CD4-positive, alpha-beta memory T cell (primary cell): ENCODE measurements at regions of chr6 and their contacts with region 1.

Region 1: GRCh38 chr6:30453508-30454116 is 35.7 kb upstream of the HLA-E start:
- DNase-seq: peak; percentile 77 to 84 (median 81)
- H3K4me3 ChIP-seq: peak overlapping the region in 1 of 2 donors; percentile 28
- H3K4me3 Mint-ChIP-seq: peak overlapping the region; percentile 52 to 77 (median 62)
- H3K27ac ChIP-seq: no peak overlapping the region
- H3K27ac Mint-ChIP-seq: peak overlapping the region in 1 of 7 donors; percentile 17
- H3K4me1 ChIP-seq: peaks cover 47% of the 10 kb centered on the region
- H3K4me1 Mint-ChIP-seq: peaks cover 31 to 54% (median 43%) of the 10 kb centered on the region in 4 donors
- H3K27me3 ChIP-seq: peaks cover 80% of the 10 kb centered on the region
- H3K27me3 Mint-ChIP-seq: peaks cover 50 to 56% of the 10 kb centered on the region in 2 donors

Region 2: DNA sequence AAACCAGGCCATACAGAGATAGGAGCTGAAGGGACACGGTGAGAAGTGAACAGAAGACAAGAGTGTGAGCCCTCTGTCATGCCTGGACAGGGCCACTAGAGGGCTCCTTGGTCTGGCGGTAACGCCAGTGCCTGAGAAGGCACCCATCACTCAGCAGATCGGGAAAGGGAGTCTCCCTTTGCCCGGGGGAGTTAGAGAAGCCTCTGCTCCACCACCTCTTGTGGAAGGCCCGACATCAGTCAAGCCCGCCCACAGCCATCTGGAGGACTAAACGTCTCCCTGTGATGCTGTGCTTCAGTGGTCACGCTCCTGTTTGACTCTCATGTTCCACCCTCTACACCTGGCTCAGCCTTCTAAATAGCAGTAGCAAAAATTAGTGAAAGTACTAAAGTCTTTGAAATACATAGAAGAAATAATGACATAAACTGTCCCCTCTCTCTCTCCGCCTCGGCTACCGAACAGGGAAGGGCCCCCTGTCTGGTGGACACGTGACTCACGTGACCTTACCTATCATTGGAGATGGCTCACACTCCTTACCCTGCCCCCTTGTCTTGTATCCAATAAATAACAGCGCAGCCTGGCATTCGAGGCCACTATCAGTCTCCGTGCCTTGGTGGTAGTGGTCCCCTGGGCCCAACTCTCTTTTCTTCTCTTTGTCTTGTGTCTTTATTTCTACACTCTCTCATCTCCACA is 42.0 kb before region 1 on chr6:
- CTCF ChIA-PET with region 1: interaction called, 7 read pairs
- POLR2A ChIA-PET with region 1: no interaction called
- intact Hi-C with region 1: loop called (anchors 1 kb)
- DNase-seq: peak; percentile 47 to 61 (median 56)
- H3K4me3 ChIP-seq: no peak overlapping the region
- H3K4me3 Mint-ChIP-seq: peak overlapping the region in 6 of 8 donors; percentile 7 to 75 (median 33)
- H3K27ac ChIP-seq: no peak overlapping the region
- H3K27ac Mint-ChIP-seq: no peak overlapping the region
- H3K4me1 ChIP-seq: peaks cover 3% of the 10 kb centered on the region
- H3K4me1 Mint-ChIP-seq: peaks cover 3 to 12% (median 7%) of the 10 kb centered on the region in 4 donors
- H3K27me3 ChIP-seq: no peaks in the 10 kb centered on the region
- H3K27me3 Mint-ChIP-seq: peaks cover 29 to 45% of the 10 kb centered on the region in 2 donors

Region 3: GRCh38 chr6:30463651-30464618 is 10.3 kb after region 1 on chr6:
- CTCF ChIA-PET with region 1: interaction called, 42 read pairs
- POLR2A ChIA-PET with region 1: interaction called, 42 read pairs
- intact Hi-C with region 1: no loop called
- DNase-seq: peak; percentile 64 to 83 (median 70)
- H3K4me3 ChIP-seq: no peak overlapping the region
- H3K4me3 Mint-ChIP-seq: peak overlapping the region; percentile 11 to 80 (median 64)
- H3K27ac ChIP-seq: no peak overlapping the region
- H3K27ac Mint-ChIP-seq: peak overlapping the region in 1 of 7 donors; percentile 66
- H3K4me1 ChIP-seq: peaks cover 52% of the 10 kb centered on the region
- H3K4me1 Mint-ChIP-seq: peaks cover 25 to 61% (median 45%) of the 10 kb centered on the region in 4 donors
- H3K27me3 ChIP-seq: peaks cover 76% of the 10 kb centered on the region
- H3K27me3 Mint-ChIP-seq: peaks cover 70 to 72% of the 10 kb centered on the region in 2 donors